Left colon (tissue), 2 donors: ENCODE measurements at regions of chr12 and their contacts with region 1.

Region 1: GRCh38 chr12:56630160-56630632 is at the start of gene BAZ2A:
- DNase-seq: peak; percentile 91 to 94
- ATAC-seq: peak; percentile 68
- total RNA-seq, gene BAZ2A: 105 to 107 TPM

Region 2: DNA sequence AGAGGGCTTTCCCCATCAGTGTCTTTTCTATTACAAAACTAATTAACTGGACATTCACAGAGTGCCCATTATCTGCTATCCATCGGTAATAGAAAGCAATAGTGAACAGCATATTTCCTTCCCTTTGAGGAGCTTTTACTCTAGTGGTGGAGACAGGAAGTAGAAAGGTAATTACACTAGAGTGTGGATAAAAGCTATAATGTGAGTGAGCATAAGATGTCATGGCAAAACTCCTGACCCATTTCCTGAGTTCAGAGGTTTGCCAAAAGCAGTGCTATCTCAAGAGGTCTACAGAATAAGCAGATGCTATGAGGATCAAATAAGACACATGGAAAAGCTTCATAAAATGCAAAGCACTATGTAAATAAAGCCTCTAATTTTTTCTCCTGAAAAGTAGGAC is 205.0 kb before region 1 on chr12:
- intact Hi-C with region 1: no loop called
- DNase-seq: no peak
- ATAC-seq: no peak

Region 3: DNA sequence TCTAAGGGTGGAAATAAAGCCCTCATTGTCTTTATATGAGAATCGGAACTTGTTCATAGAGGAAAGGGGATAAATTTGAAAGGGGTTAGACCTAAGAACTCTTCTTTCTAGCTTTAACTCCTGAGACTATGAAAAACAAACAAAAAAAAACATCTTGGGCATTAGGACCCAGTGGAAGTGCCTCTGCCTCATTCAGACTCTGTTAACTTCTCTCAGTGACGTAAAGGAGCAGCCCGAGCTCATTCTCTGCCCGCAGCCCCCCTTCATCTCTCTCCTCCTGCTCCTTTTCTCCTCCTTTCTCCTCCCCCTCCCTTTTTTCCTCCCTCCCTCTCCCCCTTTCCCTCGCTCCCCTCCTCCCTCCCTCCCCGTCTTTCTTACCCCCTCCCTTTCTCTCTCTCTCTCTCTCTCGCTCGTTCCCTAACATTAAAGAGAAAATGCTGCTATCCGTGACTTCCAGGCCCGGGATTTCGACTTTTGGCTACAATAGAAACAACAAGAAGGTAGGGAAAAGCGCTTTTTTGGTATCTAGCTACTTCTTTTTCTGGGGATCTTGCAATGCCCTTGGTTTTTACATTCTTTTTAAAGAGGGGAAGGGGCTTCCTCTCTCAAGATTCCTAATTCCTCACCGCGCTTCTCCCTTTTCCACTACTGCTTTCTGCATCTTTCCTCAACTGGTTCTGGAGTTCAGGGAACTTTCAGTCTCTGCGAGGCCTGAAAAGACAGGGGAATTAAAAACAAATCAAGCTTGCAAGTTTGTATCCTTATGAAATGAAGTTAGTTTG is 108.4 kb before region 1 on chr12 and contains the start of gene RBMS2:
- intact Hi-C with region 1: loop called in 1 of 2 experiments (anchors 5 kb)
- DNase-seq: peak; percentile 69 to 90
- ATAC-seq: peak; percentile 93
- total RNA-seq, gene RBMS2: 33.9 to 40.2 TPM

Region 4: GRCh38 chr12:56695327-56696101 is 65.3 kb after region 1 on chr12:
- intact Hi-C with region 1: no loop called
- DNase-seq: no peak
- ATAC-seq: no peak